ENCODE measurements at regions of chr3 and their contacts with region 1.

Region 1: GRCh38 chr3:10192953-10193691 is 28.4 kb downstream of the IRAK2 start:
- DNase-seq: peak; percentile 54 to 77 (median 56)
- H3K4me3 ChIP-seq: peak overlapping the region in 1 of 2 donors; percentile 33
- H3K4me3 Mint-ChIP-seq: peak overlapping the region; percentile 69 to 89 (median 82)
- H3K27ac ChIP-seq: peak overlapping the region; percentile 87
- H3K27ac Mint-ChIP-seq: peak overlapping the region; percentile 98 to 100 (median 99)
- H3K4me1 ChIP-seq: peaks cover 92% of the 10 kb centered on the region
- H3K4me1 Mint-ChIP-seq: peaks cover 64 to 90% (median 77%) of the 10 kb centered on the region in 4 donors
- H3K27me3 ChIP-seq: no peaks in the 10 kb centered on the region
- H3K27me3 Mint-ChIP-seq: no peaks in the 10 kb centered on the region

Region 2: GRCh38 chr3:10173926-10174435 is 19.1 kb before region 1 on chr3:
- CTCF ChIA-PET with region 1: interaction called, 17 read pairs
- POLR2A ChIA-PET with region 1: interaction called, 10 read pairs
- intact Hi-C with region 1: no loop called
- DNase-seq: no peak
- H3K4me3 ChIP-seq: no peak overlapping the region
- H3K4me3 Mint-ChIP-seq: no peak overlapping the region
- H3K27ac ChIP-seq: no peak overlapping the region
- H3K27ac Mint-ChIP-seq: peak overlapping the region in 4 of 7 donors; percentile 32 to 77 (median 58)
- H3K4me1 ChIP-seq: no peaks in the 10 kb centered on the region
- H3K4me1 Mint-ChIP-seq: peaks cover 8 to 20% (median 11%) of the 10 kb centered on the region in 4 donors
- H3K27me3 ChIP-seq: no peaks in the 10 kb centered on the region
- H3K27me3 Mint-ChIP-seq: no peaks in the 10 kb centered on the region

Region 3: DNA sequence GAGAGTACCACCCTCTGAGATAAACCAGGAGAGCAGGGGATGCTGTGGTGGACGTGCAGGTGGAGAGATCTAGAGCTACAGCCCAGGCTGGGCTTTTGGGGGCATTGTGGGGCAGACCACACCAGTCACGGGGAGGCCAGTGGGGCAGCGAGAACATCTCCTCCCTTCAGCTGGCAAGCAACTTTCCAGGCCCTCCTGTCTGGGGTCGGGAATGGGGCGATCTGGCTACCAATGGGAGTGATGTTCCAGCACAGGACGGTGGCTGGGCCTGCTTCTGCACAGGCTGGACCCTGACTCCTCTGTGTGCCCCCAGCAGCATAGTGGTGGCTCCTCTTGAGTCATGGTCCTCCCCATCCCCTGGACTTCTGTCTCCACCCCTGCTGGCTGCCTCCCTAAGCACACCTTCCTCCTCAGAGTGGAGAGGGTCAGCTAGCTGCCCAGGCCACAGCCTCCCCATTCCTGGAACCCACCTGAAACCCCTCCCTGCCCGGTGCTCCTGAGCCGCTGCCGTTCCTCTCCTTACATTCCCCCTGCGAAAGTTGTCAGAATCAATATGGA is 12.3 kb before region 1 on chr3:
- CTCF ChIA-PET with region 1: interaction called, 17 read pairs
- POLR2A ChIA-PET with region 1: interaction called, 19 read pairs
- intact Hi-C with region 1: no loop called
- DNase-seq: no peak
- H3K4me3 ChIP-seq: no peak overlapping the region
- H3K4me3 Mint-ChIP-seq: no peak overlapping the region
- H3K27ac ChIP-seq: no peak overlapping the region
- H3K27ac Mint-ChIP-seq: peak overlapping the region in 2 of 7 donors; percentile 51 to 65
- H3K4me1 ChIP-seq: peaks cover 8% of the 10 kb centered on the region
- H3K4me1 Mint-ChIP-seq: peaks cover 4 to 23% (median 12%) of the 10 kb centered on the region in 4 donors
- H3K27me3 ChIP-seq: no peaks in the 10 kb centered on the region
- H3K27me3 Mint-ChIP-seq: no peaks in the 10 kb centered on the region

Region 4: DNA sequence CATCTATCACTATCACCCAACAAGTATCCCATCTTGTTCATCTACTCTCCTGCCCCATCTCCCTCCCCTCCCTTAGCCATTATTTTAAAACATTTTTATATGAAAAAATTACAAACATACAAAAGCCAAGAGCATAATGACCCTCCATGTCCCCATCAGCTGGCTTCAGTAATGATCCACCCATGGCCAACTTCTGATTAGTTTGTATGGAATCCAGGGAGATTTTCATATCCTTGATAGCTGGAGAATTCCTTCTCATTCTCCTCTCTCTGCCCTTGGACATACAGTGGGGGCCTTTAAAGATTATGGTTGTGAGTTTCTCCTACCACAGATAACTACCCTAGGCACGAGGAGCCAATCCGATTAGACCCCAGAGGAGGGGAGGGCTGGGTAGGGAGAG is 11.8 kb after region 1 on chr3:
- CTCF ChIA-PET with region 1: interaction called, 10 read pairs
- POLR2A ChIA-PET with region 1: interaction called, 19 read pairs
- intact Hi-C with region 1: no loop called
- DNase-seq: no peak
- H3K4me3 ChIP-seq: no peak overlapping the region
- H3K4me3 Mint-ChIP-seq: no peak overlapping the region
- H3K27ac ChIP-seq: no peak overlapping the region
- H3K27ac Mint-ChIP-seq: peak overlapping the region in 1 of 7 donors; percentile 42
- H3K4me1 ChIP-seq: peaks cover 26% of the 10 kb centered on the region
- H3K4me1 Mint-ChIP-seq: peaks cover 9 to 31% (median 21%) of the 10 kb centered on the region in 4 donors
- H3K27me3 ChIP-seq: no peaks in the 10 kb centered on the region
- H3K27me3 Mint-ChIP-seq: no peaks in the 10 kb centered on the region

Region 5: GRCh38 chr3:10242182-10243065 is 49.3 kb after region 1 on chr3:
- CTCF ChIA-PET with region 1: interaction called, 4 read pairs
- POLR2A ChIA-PET with region 1: interaction called, 25 read pairs
- intact Hi-C with region 1: loop called (anchors 1 kb)
- DNase-seq: peak; percentile 80 to 94 (median 83)
- H3K4me3 ChIP-seq: peak overlapping the region; percentile 34 to 36
- H3K4me3 Mint-ChIP-seq: peak overlapping the region; percentile 77 to 90 (median 80)
- H3K27ac ChIP-seq: peak overlapping the region; percentile 47
- H3K27ac Mint-ChIP-seq: peak overlapping the region; percentile 89 to 97 (median 95)
- H3K4me1 ChIP-seq: peaks cover 54% of the 10 kb centered on the region
- H3K4me1 Mint-ChIP-seq: peaks cover 37 to 67% (median 53%) of the 10 kb centered on the region in 4 donors
- H3K27me3 ChIP-seq: no peaks in the 10 kb centered on the region
- H3K27me3 Mint-ChIP-seq: no peaks in the 10 kb centered on the region

Measured in CD4-positive, alpha-beta memory T cell (primary cell).